ENCODE measurements at regions of chr5 and their contacts with region 1.

Region 1: DNA sequence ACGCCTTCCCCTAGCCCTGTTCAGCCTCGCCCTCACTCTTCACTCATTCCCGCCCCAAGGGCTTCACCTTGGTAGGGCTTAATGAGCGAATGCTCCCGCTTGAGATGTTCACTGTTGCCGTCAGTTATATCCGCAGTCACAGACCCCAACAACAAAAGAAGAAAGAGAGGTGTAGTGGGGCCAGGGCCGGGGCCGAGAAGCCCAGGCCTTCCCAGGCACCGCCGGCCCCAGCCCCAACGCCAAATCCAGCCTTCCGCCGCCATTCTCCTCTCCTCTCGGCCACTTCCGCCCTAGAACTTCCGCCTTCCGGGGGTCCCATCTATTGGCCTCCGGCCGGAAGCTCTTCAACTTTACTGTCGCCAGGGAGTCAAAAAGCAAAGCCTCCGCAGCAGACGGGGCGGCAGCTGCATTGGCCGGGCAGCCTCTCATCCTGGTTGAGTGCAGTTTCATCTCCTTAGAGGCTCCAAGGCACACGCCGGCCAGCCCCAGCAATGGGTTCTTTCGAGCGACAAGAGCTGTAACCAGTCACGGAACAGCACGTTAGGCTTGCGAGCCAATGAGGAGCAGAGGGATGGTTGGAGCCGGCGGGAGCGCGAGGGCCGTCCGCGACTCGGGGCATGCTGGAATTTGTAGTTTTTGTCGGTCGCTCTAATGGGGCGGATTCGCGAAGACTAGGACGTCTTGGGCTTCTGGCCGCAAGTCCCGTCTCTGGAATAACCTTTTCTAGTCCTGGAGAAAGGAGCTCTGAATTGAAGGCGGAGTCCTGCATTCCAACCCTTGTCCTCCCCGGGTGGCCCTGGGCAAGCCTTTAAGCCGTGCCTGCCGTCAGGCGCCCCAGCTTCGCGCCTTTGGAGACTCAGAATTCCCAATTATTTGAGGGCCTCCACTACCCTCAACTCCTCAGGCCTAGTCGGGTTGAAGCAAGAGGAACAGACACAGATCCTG is at the start of gene LMAN2:
- DNase-seq: peak; percentile 96
- ATAC-seq: peak; percentile 99
- H3K4me3 Mint-ChIP-seq: peak within 1 kb of the TSS; percentile 98
- H3K27ac Mint-ChIP-seq: peak within 1 kb of the TSS; percentile 100
- H3K4me1 Mint-ChIP-seq: peaks cover 65% of the 10 kb centered on the region
- H3K27me3 Mint-ChIP-seq: no peaks in the 10 kb centered on the region
- total RNA-seq, gene LMAN2: 133 to 140 TPM

Region 2: DNA sequence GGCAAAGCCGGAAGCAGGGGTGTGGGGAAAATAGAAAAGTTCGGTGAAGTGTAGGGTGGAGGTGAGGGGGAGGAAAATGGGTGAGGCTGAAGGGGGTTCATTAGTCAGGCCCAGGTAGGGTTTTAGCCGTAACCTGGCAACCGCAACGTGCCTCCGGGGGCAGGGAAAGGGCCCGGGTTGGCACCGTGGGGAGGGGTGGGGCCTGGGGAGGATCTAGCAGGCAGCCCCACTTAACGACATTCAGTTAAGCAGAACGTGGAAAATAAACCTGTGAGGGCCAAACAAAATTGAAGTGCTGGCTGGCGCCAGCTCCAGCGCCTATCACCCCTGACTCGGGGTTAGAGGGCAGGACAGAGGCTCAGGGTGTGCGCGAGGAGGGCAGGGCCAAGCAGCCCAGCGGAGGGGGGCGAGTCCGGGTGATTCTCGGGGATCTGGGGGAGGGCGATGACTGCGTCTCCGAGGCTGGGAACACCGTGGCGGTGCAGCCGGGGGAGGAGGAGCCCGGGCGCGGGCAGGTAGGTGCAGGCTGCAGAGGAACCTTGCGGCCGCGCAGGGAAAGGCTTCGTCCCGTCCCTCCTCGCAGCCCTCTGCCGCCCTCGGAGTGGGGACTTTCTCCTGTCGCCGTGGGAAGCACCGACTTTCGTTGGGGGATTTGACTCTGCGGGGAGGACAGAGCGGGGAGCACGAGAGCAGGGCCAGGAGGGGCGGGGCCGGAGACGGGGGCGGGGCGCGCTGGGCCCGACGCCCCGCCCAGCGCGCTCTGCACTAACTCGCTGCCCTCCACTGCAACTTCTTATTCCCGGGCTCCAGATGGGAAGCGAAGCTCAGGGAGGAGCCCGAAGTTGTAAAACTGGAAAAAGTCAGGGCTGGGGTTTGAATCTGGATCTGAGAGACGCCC is 11.2 kb after region 1 on chr5:
- CTCF ChIA-PET with region 1: interaction called, 11 read pairs
- DNase-seq: peak; percentile 68
- ATAC-seq: peak; percentile 75
- H3K4me3 Mint-ChIP-seq: peak overlapping the region; percentile 74
- H3K27ac Mint-ChIP-seq: peak overlapping the region; percentile 64
- H3K4me1 Mint-ChIP-seq: peaks cover 71% of the 10 kb centered on the region
- H3K27me3 Mint-ChIP-seq: no peaks in the 10 kb centered on the region

Region 3: GRCh38 chr5:177370488-177371119 is 18.9 kb after region 1 on chr5:
- CTCF ChIA-PET with region 1: interaction called, 79 read pairs
- DNase-seq: peak; percentile 77
- ATAC-seq: peak; percentile 83
- H3K4me3 Mint-ChIP-seq: peak overlapping the region; percentile 53
- H3K27ac Mint-ChIP-seq: no peak overlapping the region
- H3K4me1 Mint-ChIP-seq: peaks cover 56% of the 10 kb centered on the region
- H3K27me3 Mint-ChIP-seq: no peaks in the 10 kb centered on the region

Measured in activated CD8-positive, alpha-beta memory T cell treated with anti-CD3 and anti-CD28 coated beads, Interleukin-2, amount 10 ng/mL, durations not matched to agents 7 days and 5 days (primary cell).